Left colon (tissue), 2 donors: ENCODE measurements at regions of chr10 and their contacts with region 1.

Region 1: GRCh38 chr10:94402015-94402842 is at the start of gene TBC1D12:
- DNase-seq: peak; percentile 96 to 97
- ATAC-seq: peak; percentile 88
- total RNA-seq, gene TBC1D12: 15.0 to 23.8 TPM

Region 2: DNA sequence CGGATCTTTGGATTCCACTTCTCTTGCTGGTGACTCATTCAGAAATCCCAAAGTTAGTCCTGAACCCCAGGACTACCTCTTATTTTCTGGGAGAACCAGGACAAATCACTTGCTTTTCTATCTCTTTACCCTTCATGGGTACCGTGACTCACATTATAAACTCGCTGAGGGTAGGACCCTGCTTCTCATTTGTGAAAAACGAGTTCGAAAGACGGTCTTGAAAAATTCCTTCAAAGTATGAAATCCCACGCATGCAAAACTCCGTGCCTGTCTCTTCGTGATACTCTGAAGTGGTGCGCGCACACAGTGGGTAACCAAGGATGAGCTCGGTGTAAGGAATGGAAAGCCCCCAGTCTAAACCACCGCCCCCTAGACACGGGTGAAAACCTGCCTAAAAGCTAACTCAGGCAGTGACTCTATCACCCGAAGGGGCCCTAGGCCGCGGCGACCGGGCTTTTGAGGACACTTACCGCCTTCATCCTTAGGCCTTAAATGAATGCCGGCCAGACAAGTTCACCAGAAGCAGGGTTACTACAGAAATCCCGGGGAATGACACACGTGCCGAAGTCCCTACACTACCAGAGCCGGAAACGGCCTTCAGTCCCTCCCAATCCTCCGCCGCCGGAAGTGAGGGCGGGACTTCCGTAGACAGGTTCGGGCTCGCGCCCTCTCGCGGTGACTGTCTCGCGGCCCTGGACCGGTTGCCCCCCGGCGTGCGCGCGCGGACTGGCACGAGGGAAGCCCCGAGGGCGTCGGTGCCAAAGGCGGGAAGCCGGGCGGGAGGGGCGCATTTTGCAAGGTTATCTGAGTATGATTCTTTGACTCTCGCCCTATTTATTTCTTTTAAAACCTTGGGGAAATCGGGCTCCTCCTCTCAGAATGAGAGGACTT is 39.6 kb before region 1 on chr10 and contains the start of gene NOC3L:
- intact Hi-C with region 1: loop called in 1 of 2 experiments (anchors 5 kb)
- DNase-seq: peak; percentile 97 to 99
- ATAC-seq: peak; percentile 99
- total RNA-seq, gene NOC3L: 6.3 to 6.6 TPM